ENCODE measurements at regions of chr10 and their contacts with region 1.

Region 1: GRCh38 chr10:5446390-5446926 is 34.1 kb downstream of the NET1 start:
- DNase-seq: peak; percentile 95 to 98
- ATAC-seq: peak; percentile 97
- H3K4me3 ChIP-seq: peak overlapping the region; percentile 98 to 100
- H3K27ac ChIP-seq: peak overlapping the region in 1 of 2 donors; percentile 50
- H3K4me1 ChIP-seq: peaks cover 0 to 8% of the 10 kb centered on the region in 2 donors
- H3K27me3 ChIP-seq: no peaks in the 10 kb centered on the region

Region 2: GRCh38 chr10:5548527-5549223 is 102.2 kb after region 1 on chr10:
- intact Hi-C with region 1: loop called in 1 of 2 experiments (anchors 5 kb)
- DNase-seq: peak; percentile 83 to 84
- ATAC-seq: peak; percentile 74
- H3K4me3 ChIP-seq: no peak overlapping the region
- H3K27ac ChIP-seq: peak overlapping the region; percentile 71 to 89
- H3K4me1 ChIP-seq: peaks cover 3 to 4% of the 10 kb centered on the region in 2 donors
- H3K27me3 ChIP-seq: no peaks in the 10 kb centered on the region

Region 3: DNA sequence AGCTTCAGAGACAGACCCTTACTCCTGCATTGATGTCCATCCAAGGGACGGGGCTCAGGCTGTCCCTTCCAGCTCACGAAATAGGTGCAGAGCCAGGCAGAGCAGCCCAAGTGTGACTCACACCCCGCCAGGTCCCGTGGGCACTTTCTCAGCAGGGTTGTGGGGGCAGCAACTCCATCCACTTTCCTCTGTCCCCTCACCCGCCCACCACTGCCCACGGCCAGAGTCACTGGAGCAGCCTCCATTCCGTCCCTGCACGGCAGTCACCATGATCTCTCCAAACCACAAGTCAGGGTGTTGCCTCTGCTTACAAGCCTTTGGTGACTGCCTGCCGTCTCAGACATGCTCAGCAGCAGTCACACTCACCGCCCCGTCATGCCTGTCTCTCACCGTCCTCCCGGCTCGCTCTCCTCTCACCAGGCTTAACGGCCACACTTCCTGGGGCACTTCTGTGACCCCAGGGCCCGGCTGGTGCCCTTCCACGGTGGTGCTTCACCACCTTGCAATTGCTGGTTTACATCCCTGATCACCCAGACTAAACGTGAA is 117.6 kb after region 1 on chr10:
- intact Hi-C with region 1: loop called in 1 of 2 experiments (anchors 5 kb)
- DNase-seq: peak in 1 of 2 donors; percentile 82
- ATAC-seq: peak; percentile 33
- H3K4me3 ChIP-seq: no peak overlapping the region
- H3K27ac ChIP-seq: peak overlapping the region; percentile 2 to 19
- H3K4me1 ChIP-seq: peaks cover 0 to 1% of the 10 kb centered on the region in 2 donors
- H3K27me3 ChIP-seq: no peaks in the 10 kb centered on the region

Region 4: GRCh38 chr10:5623081-5623748 is 176.8 kb after region 1 on chr10:
- intact Hi-C with region 1: loop called (anchors 2 to 5 kb)
- DNase-seq: peak; percentile 93 to 98
- ATAC-seq: peak; percentile 85
- H3K4me3 ChIP-seq: no peak overlapping the region
- H3K27ac ChIP-seq: no peak overlapping the region
- H3K4me1 ChIP-seq: peaks cover 0 to 2% of the 10 kb centered on the region in 2 donors
- H3K27me3 ChIP-seq: no peaks in the 10 kb centered on the region

Region 5: GRCh38 chr10:5684318-5684970 is 238.0 kb after region 1 on chr10 and contains the start of gene TASOR2:
- intact Hi-C with region 1: loop called in 1 of 2 experiments (anchors 5 kb)
- DNase-seq: peak; percentile 99
- ATAC-seq: peak; percentile 97
- H3K4me3 ChIP-seq: peak within 1 kb of the TSS; percentile 81 to 90
- H3K27ac ChIP-seq: peak within 1 kb of the TSS in 1 of 2 donors; percentile 73
- H3K4me1 ChIP-seq: no peaks in the 10 kb centered on the region
- H3K27me3 ChIP-seq: no peaks in the 10 kb centered on the region
- total RNA-seq, gene TASOR2: 68.2 to 72.6 TPM

Region 6: DNA sequence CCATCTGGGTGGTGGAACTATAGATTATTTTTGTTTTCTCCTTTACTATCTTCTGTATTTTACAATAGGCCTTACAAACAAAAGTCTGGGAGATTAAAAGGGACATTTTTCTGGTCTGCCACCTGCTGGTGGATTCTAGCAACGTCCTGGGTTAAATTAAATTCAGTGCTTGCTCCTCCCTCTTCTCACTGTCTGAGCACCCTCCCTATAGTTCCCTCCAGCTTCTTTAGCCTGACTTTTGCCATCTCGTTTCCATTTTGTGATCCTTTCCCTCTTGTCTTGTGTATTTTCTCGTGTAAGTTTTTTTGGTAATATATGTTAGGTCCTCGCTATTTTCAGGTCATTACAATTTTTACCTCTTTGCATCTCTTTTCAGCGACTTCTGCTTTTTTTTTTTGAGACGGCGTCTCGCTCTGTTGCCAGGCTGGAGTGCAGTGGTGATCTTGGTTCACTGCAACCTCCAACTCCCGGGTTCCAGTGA is 427.1 kb after region 1 on chr10:
- intact Hi-C with region 1: loop called in 1 of 2 experiments (anchors 10 kb)
- DNase-seq: peak in 1 of 2 donors; percentile 70
- ATAC-seq: peak; percentile 88
- H3K4me3 ChIP-seq: no peak overlapping the region
- H3K27ac ChIP-seq: no peak overlapping the region
- H3K4me1 ChIP-seq: no peaks in the 10 kb centered on the region
- H3K27me3 ChIP-seq: no peaks in the 10 kb centered on the region